Sigmoid colon (tissue), 7 donors: ENCODE measurements at regions of chr9 and their contacts with region 1.

Region 1: DNA sequence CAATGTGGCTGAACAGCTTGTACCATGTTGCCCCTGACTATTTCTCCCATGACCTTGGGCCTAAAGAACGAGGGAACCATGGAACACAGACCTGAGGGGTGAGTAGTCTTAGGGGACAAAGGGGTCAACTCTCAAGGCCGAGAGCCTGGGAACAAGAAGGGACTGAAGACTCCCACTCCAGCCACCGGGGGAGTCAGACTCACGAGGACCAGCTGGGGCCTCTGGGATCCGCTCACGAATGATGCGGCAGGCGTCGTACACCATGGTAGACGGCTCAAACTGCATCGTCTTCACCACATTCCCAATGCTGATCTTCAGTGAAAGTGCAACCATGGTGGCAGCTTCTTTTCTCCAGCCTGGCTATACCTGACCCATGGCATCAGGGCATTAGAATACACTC is 6.6 kb downstream of the TLN1 start:
- DNase-seq: peak; percentile 63
- H3K4me3 ChIP-seq: no peak overlapping the region
- H3K27ac ChIP-seq: peak overlapping the region; percentile 97 to 99 (median 98)
- H3K4me1 ChIP-seq: peaks cover 0 to 53% (median 53%) of the 10 kb centered on the region in 4 donors
- H3K27me3 ChIP-seq: no peaks in the 10 kb centered on the region
- CTCF ChIP-seq: no peak
- EP300 ChIP-seq: no peak
- POLR2A ChIP-seq: no peak

Region 2: GRCh38 chr9:35705836-35706430 is 19.4 kb before region 1 on chr9:
- intact Hi-C with region 1: loop called (anchors 2 kb)
- DNase-seq: no peak
- H3K4me3 ChIP-seq: no peak overlapping the region
- H3K27ac ChIP-seq: peak overlapping the region; percentile 30 to 49 (median 38)
- H3K4me1 ChIP-seq: no peaks in the 10 kb centered on the region
- H3K27me3 ChIP-seq: no peaks in the 10 kb centered on the region
- CTCF ChIP-seq: no peak
- EP300 ChIP-seq: no peak
- POLR2A ChIP-seq: no peak